ENCODE measurements at regions of chr4 and their contacts with region 1.

Region 1: GRCh38 chr4:6716018-6716911 is at the start of gene BLOC1S4:
- DNase-seq: peak; percentile 82 to 93 (median 86)
- H3K4me3 ChIP-seq: peak within 1 kb of the TSS in 3 of 4 donors; percentile 55 to 95 (median 56)
- H3K27ac ChIP-seq: peak within 1 kb of the TSS; percentile 56 to 99 (median 83)
- H3K4me1 ChIP-seq: peaks cover 0 to 16% of the 10 kb centered on the region in 2 donors
- H3K27me3 ChIP-seq: no peaks in the 10 kb centered on the region
- CTCF ChIP-seq: peak in 4 of 6 experiments; percentile 15 to 31 (median 26)
- POLR2A ChIP-seq: peak; percentile 83 to 86
- total RNA-seq, gene BLOC1S4: 15.8 to 31.7 (median 18.7) TPM

Region 2: DNA sequence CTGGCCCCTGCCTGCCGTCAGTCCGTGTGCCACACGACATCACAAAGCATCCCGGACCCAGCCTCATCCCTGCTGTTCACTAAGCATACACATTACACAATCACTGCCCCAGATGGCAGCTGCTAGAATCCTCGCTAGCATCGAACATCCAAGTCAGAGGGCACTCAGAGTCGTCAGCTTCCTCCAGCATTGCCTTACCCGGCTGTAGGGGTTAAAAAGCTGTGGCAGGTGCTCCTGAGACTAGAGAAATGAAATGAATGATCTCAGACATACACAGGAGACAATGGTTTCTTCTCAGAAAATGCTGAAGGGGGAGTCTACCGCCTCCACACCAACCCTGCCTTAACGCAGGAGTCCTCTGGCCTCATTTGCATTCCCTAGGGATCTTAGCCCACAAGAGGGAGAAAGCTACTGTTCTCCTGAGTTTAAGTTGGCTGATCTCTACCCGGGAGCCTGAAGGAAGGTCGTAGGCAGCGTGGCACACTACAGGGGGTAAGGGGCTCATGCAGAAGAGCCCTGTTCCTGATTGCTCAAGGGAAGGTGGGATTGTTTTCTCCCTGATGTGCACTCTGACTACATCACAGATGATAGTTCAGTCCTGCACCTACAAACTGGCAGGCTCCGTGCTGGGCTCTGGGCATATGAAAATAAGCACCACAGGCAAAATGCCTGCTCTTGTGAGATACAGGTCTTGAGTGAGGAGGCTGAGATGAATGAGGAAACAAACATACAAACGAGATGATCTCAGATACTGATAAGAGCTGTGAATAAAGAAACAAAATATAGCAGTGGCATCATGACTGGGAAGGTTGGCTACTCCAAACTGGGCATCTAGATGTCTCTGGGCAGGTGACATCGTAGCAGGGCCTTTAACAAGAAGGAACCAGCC is 63.6 kb after region 1 on chr4:
- intact Hi-C with region 1: loop called (anchors 5 to 10 kb)
- DNase-seq: peak in 2 of 7 donors; percentile 11 to 17
- H3K4me3 ChIP-seq: no peak overlapping the region
- H3K27ac ChIP-seq: no peak overlapping the region
- H3K4me1 ChIP-seq: peaks cover 6 to 16% of the 10 kb centered on the region in 2 donors
- H3K27me3 ChIP-seq: no peaks in the 10 kb centered on the region
- CTCF ChIP-seq: no peak
- POLR2A ChIP-seq: no peak

Region 3: DNA sequence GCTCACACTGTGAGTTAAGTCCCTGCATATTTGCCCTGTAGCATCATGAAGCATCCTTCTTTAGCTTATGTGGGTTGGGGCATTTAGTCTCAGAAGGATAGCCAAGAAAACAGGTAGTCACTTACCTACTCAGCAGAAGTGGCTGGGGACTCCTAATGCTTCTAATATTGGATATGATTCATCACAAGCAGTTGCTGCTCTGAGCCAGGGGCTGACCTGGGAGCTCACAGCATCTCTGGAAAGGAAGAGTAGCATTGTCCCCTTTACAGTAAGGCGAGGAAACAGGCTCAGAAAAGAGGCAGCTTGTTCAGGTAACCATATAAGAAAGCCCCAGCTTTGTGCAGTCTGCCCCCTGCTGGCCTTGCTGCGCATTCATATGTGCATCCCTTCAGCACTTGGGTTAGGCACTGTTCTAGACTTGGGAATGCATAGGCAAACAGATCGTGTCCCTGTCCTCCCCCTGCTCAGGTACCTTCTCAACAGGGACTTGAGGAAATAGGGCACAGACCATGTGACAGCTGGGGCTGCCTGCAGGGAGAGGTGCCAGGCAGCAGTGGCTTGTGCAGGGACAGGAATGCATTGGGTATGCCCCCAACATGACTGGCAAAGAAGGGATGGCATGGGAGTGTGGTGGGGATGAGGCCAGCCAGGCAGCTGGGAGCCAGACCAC is 157.7 kb after region 1 on chr4:
- intact Hi-C with region 1: loop called (anchors 2 kb)
- DNase-seq: peak; percentile 73 to 90 (median 82)
- H3K4me3 ChIP-seq: no peak overlapping the region
- H3K27ac ChIP-seq: no peak overlapping the region
- H3K4me1 ChIP-seq: no peaks in the 10 kb centered on the region
- H3K27me3 ChIP-seq: no peaks in the 10 kb centered on the region
- CTCF ChIP-seq: peak; percentile 76 to 86 (median 82)
- POLR2A ChIP-seq: no peak

Region 4: GRCh38 chr4:7067452-7068278 is 351.4 kb after region 1 on chr4 and contains the start of gene GRPEL1:
- intact Hi-C with region 1: loop called in 1 of 2 experiments (anchors 5 kb)
- DNase-seq: peak; percentile 99 to 100 (median 100)
- H3K4me3 ChIP-seq: peak within 1 kb of the TSS; percentile 36 to 88 (median 71)
- H3K27ac ChIP-seq: peak within 1 kb of the TSS; percentile 93 to 98 (median 95)
- H3K4me1 ChIP-seq: peaks cover 26 to 39% of the 10 kb centered on the region in 2 donors
- H3K27me3 ChIP-seq: no peaks in the 10 kb centered on the region
- CTCF ChIP-seq: peak in 1 of 6 experiments; percentile 17
- POLR2A ChIP-seq: peak; percentile 99
- total RNA-seq, gene GRPEL1: 43.7 to 249 (median 83.1) TPM

Region 5: GRCh38 chr4:7075962-7076695 is 359.9 kb after region 1 on chr4:
- intact Hi-C with region 1: loop called in 1 of 2 experiments (anchors 5 kb)
- DNase-seq: peak in 1 of 7 donors; percentile 43
- H3K4me3 ChIP-seq: no peak overlapping the region
- H3K27ac ChIP-seq: peak overlapping the region in 1 of 5 donors; percentile 61
- H3K4me1 ChIP-seq: no peaks in the 10 kb centered on the region
- H3K27me3 ChIP-seq: no peaks in the 10 kb centered on the region
- CTCF ChIP-seq: no peak
- POLR2A ChIP-seq: no peak

Measured in adrenal gland (tissue), 19 donors.